K562 (cell line): ENCODE measurements at regions of chr18 and their contacts with region 1.

Region 1: GRCh38 chr18:35756506-35757117 is 175.1 kb downstream of the GALNT1 start:
- DNase-seq: peak; percentile 59 to 72 (median 67)
- ATAC-seq: peak; percentile 92
- H3K4me3 ChIP-seq: no peak overlapping the region
- H3K27ac ChIP-seq: no peak overlapping the region
- H3K4me1 ChIP-seq: no peaks in the 10 kb centered on the region
- H3K27me3 ChIP-seq: peaks cover 11 to 32% of the 10 kb centered on the region in 2 experiments
- CTCF ChIP-seq: peak; percentile 72 to 89 (median 75)
- EP300 ChIP-seq: no peak
- POLR2A ChIP-seq: no peak
- RAD21 ChIP-seq: peak; percentile 93 to 95

Region 2: GRCh38 chr18:35231052-35231451 is 525.6 kb before region 1 on chr18:
- CTCF ChIA-PET with region 1: no interaction called
- POLR2A ChIA-PET with region 1: no interaction called
- in situ Hi-C with region 1: no loop called
- intact Hi-C with region 1: loop called (anchors 10 kb)
- DNase-seq: peak; percentile 71 to 92 (median 76)
- ATAC-seq: peak; percentile 96
- H3K4me3 ChIP-seq: no peak overlapping the region
- H3K27ac ChIP-seq: 0 out of 3 replicates have a peak overlapping the region, but pooled peaks have one; percentile 9
- H3K4me1 ChIP-seq: 0 out of 5 replicates have a peak, but pooled peaks cover 0 to 3% of the 10 kb centered on the region in 2 experiments
- H3K27me3 ChIP-seq: no peaks in the 10 kb centered on the region
- CTCF ChIP-seq: peak; percentile 91 to 97 (median 92)
- EP300 ChIP-seq: peak; percentile 40; the same call in 1 of the 2 replicates
- POLR2A ChIP-seq: no peak
- RAD21 ChIP-seq: peak; percentile 85 to 94

Region 3: GRCh38 chr18:35407871-35408481 is 348.6 kb before region 1 on chr18:
- CTCF ChIA-PET with region 1: no interaction called
- POLR2A ChIA-PET with region 1: no interaction called
- in situ Hi-C with region 1: no loop called
- intact Hi-C with region 1: loop called (anchors 5 kb)
- DNase-seq: peak; percentile 61 to 85 (median 65)
- ATAC-seq: peak; percentile 90
- H3K4me3 ChIP-seq: no peak overlapping the region
- H3K27ac ChIP-seq: no peak overlapping the region
- H3K4me1 ChIP-seq: peaks cover 8 to 14% of the 10 kb centered on the region in 2 experiments; a peak in 3 of 5 replicates
- H3K27me3 ChIP-seq: peaks cover 0 to 9% of the 10 kb centered on the region in 2 experiments; a peak in 1 of 5 replicates
- CTCF ChIP-seq: peak; percentile 69 to 91 (median 84)
- EP300 ChIP-seq: no peak; the same call in 1 of the 2 replicates
- POLR2A ChIP-seq: no peak
- RAD21 ChIP-seq: peak; percentile 87 to 95

Region 4: GRCh38 chr18:35949903-35950627 is 193.5 kb after region 1 on chr18:
- CTCF ChIA-PET with region 1: no interaction called
- POLR2A ChIA-PET with region 1: no interaction called
- in situ Hi-C with region 1: loop called (anchors 10 kb)
- intact Hi-C with region 1: loop called (anchors 1 kb)
- DNase-seq: peak; percentile 60 to 70 (median 66)
- ATAC-seq: peak; percentile 89
- H3K4me3 ChIP-seq: no peak overlapping the region
- H3K27ac ChIP-seq: no peak overlapping the region
- H3K4me1 ChIP-seq: peaks cover 0 to 7% of the 10 kb centered on the region in 2 experiments; a peak in 2 of 5 replicates
- H3K27me3 ChIP-seq: peaks cover 0 to 12% of the 10 kb centered on the region in 2 experiments; a peak in 4 of 5 replicates
- CTCF ChIP-seq: peak; percentile 72 to 90 (median 72)
- EP300 ChIP-seq: no peak
- POLR2A ChIP-seq: no peak
- RAD21 ChIP-seq: peak; percentile 46 to 74

Region 5: DNA sequence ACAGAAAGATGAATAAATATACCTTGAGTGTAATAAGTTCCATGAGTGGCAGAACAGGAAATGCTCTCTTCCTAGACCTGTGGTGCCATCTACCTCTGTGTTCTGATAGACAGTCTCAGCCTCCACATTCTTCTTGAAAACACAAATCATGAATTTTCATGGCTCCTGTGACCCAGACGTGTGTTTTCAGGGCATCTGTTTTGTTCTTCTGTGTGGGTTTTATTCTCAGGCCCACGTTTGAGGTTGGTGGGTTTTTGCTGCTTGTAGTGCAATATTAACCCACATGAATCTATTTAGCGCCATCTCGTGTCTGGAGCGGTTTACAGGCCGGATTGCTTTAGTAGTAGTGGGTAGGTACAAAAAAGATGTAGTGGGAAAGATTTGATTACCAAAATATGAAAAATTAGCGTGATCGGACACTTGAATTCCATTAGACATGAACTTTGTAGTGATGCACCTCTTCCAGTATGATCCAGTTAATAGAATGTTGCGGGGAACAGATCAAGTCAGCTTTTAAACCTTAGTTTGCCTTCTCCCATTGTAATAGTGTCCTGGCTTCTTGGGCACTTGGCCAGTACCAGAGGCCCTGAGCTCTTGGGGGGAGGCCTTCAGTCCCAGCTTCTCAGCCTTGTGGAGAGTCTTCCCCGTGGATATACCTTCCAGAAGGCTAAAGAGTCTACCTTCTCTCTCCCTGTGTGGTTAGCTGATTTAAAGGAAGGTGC is 815.7 kb after region 1 on chr18:
- CTCF ChIA-PET with region 1: no interaction called
- POLR2A ChIA-PET with region 1: no interaction called
- in situ Hi-C with region 1: no loop called
- intact Hi-C with region 1: loop called (anchors 10 kb)
- DNase-seq: peak in 3 of 4 experiments; percentile 22 to 57 (median 49)
- ATAC-seq: peak; percentile 92
- H3K4me3 ChIP-seq: no peak overlapping the region
- H3K27ac ChIP-seq: no peak overlapping the region
- H3K4me1 ChIP-seq: no peaks in the 10 kb centered on the region
- H3K27me3 ChIP-seq: no peaks in the 10 kb centered on the region
- CTCF ChIP-seq: peak; percentile 57 to 69 (median 65)
- EP300 ChIP-seq: no peak
- POLR2A ChIP-seq: no peak
- RAD21 ChIP-seq: peak; percentile 69 to 72